Activated naive CD4-positive, alpha-beta T cell treated with anti-CD3 and anti-CD28 coated beads, Interleukin-2, amount 10 ng/mL, durations not matched to agents 7 days and 5 days (primary cell): ENCODE measurements at regions of chr15 and their contacts with region 1.

Region 1: GRCh38 chr15:93018580-93018979 is 70.4 kb downstream of the RGMA start:
- DNase-seq: no peak
- H3K4me3 Mint-ChIP-seq: no peak overlapping the region
- H3K27ac Mint-ChIP-seq: peak overlapping the region; percentile 57
- H3K4me1 Mint-ChIP-seq: peaks cover 62% of the 10 kb centered on the region
- H3K27me3 Mint-ChIP-seq: no peaks in the 10 kb centered on the region

Region 2: GRCh38 chr15:93001881-93002280 is 16.7 kb before region 1 on chr15:
- CTCF ChIA-PET with region 1: no interaction called
- DNase-seq: no peak
- H3K4me3 Mint-ChIP-seq: no peak overlapping the region
- H3K27ac Mint-ChIP-seq: peak overlapping the region; percentile 77
- H3K4me1 Mint-ChIP-seq: peaks cover 20% of the 10 kb centered on the region
- H3K27me3 Mint-ChIP-seq: no peaks in the 10 kb centered on the region

Region 3: DNA sequence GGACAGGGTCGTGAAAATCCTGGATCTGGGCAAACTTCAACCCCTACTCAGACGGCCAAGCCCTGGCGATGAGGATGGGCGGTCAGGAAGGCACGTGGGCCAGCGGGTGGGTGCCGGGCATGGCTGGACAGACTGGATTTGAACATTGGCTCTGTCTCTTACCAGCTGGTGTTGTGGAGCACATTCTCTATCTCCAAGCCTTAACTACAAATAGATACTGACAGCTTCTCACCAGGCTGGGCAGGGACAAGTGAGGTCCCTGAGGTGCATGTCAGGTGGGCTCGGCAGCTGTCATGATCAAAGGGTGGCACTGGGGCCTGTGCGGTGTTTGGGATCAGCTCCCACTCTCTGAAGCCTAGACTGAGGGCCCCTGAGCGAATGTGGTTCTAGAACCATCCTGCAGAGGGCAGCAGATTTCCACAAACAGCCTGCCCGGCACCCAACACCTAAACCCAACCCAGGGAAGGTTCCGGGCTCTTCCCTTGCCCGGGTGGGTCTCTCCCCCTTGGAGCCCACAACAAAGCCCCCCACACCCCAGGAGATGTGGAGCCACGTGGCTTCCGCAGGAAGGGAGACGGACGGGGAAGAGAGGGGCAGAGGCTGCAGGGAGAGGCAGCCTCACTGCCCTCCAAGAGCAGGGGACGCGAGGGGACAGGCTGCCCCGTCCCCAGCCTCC is 12.0 kb after region 1 on chr15:
- CTCF ChIA-PET with region 1: interaction called, 15 read pairs
- DNase-seq: peak; percentile 78
- H3K4me3 Mint-ChIP-seq: no peak overlapping the region
- H3K27ac Mint-ChIP-seq: peak overlapping the region; percentile 49
- H3K4me1 Mint-ChIP-seq: peaks cover 16% of the 10 kb centered on the region
- H3K27me3 Mint-ChIP-seq: peaks cover 3% of the 10 kb centered on the region

Region 4: DNA sequence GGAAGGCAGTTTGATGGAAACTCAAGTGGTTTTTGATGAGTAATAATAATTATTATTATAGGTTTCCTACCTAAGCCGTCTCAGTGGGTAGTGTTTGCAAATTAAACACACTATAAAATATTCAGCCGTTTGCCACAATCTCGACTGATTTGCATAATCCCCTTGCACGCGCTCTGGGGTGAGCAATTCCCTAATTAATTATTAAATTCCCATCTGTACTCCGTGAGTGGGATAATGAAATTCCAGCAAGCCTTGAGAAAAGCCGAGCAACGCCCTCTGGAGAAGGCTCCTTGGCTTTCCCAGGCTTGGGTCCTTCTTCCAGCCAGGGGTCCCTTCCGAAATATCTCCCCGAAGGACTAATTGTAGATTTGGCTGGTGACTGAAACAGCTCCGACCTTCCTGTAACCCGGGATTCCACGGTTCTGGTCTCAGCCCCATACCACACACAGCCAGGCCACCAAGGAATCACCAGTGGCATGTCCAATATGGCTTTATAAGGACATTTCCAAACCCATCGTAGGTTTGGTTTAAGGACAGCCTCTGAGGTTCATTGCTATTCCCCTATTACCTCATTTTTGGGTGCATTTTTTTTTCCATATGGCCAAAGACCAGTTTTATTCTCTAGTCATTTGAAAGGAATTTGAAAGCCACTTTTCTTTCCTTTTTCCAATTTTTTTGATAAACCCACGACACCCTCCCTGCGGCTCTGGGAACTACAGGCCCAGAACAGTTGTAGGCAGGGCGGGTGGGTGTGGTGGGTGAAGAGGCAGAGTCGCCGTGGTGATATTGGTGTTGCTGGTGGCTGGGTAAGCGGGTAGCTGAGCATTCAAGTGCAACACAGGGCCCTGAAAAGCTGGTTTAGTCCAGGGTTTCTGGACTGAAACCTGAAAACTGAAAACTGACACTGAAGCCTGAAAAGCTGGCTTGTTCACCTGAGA is 103.7 kb after region 1 on chr15:
- CTCF ChIA-PET with region 1: no interaction called
- DNase-seq: no peak
- H3K4me3 Mint-ChIP-seq: no peak overlapping the region
- H3K27ac Mint-ChIP-seq: no peak overlapping the region
- H3K4me1 Mint-ChIP-seq: peaks cover 12% of the 10 kb centered on the region
- H3K27me3 Mint-ChIP-seq: peaks cover 11% of the 10 kb centered on the region

Region 5: GRCh38 chr15:94053626-94054025 is 1035.0 kb after region 1 on chr15:
- CTCF ChIA-PET with region 1: no interaction called
- DNase-seq: no peak
- H3K4me3 Mint-ChIP-seq: no peak overlapping the region
- H3K27ac Mint-ChIP-seq: no peak overlapping the region
- H3K4me1 Mint-ChIP-seq: no peaks in the 10 kb centered on the region
- H3K27me3 Mint-ChIP-seq: no peaks in the 10 kb centered on the region